Right cardiac atrium (tissue), 5 donors: ENCODE measurements at regions of chr11 and their contacts with region 1.

Region 1: DNA sequence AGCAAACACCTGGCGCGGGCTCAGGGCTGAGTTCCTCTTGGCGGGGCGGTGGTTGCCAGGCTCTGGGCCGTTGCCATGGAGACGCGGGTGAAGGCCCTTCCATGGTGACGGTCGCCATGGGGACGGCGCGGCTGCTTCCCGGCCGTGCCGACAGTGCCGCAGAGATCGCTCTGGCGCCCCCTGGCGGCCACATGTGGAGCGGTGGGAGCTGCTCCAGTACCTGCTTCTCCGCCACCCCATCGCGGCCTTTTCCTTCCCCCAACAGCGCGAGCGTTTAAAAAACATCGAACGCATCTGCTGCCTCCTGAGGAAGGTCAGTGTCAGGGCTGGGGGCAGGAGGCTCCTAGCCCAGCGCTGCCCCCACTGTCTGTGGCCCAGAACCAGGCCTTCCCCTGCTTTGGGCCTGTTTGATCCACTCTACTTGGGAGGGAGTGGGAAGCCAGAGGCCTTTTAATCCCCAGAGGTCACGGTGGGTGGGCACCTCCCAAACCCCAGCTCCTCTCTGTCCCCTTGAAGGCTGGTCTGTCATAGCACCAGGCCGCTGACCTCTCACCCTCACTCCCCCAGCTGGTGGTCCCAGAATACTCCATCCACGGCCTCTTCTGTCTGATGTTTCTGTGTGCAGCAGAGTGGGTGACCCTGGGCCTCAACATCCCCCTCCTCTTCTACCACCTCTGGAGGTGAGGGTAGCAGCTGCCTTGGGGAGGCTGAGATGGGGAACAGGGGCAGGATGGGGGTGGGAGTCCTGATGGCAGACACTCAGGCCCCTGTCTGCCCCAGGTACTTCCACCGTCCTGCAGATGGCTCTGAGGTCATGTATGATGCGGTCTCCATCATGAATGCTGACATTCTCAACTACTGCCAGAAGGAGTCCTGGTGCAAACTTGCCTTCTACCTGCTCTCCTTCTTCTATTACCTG is 4.8 kb downstream of the CNIH2 start:
- DNase-seq: peak; percentile 99 to 100 (median 99)
- ATAC-seq: peak; percentile 80 to 87
- H3K4me3 ChIP-seq: no peak overlapping the region
- H3K27ac ChIP-seq: no peak overlapping the region
- H3K4me1 ChIP-seq: no peaks in the 10 kb centered on the region
- H3K27me3 ChIP-seq: no peaks in the 10 kb centered on the region

Region 2: DNA sequence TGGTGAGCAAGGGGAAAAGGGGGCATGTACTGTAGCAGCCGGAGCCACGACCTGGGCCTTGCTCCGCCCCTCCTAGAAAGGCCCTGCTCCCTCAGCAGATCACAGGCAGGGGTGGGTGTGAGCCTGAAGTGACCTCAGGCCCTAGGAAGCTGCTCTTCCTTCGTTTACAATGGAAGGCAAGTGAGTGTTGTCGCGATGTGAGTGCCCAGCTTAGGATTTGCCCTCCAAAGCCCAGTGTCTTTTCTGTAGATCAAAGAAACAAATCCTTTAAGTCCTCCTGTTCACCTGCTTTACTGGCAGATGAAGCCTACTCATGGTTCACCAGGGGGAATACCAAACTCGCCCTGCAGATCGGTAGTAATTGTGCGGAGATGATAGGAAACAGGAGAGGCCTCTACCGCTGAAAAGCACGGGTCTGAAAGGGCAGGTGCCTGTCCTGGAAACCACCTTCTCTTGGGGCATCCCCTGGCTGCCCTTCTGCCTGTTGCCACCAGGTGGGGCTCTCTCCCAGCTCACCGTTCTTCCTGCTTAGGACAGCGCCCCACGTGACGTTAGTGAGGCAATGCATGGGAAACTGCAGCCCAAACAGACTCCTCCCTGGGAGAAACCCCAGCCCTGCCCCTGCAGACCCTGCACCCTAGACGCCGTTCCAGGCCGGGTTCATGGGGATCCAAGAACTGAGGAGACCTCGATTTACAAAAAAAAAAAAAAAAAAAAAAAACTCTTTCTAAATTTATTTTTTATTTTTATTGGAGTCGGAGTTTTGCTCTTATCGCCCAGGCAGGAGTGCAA is 60.2 kb before region 1 on chr11:
- intact Hi-C with region 1: loop called in 1 of 4 experiments (anchors 2 kb)
- DNase-seq: peak; percentile 88 to 95 (median 93)
- ATAC-seq: peak; percentile 84 to 88
- H3K4me3 ChIP-seq: no peak overlapping the region
- H3K27ac ChIP-seq: no peak overlapping the region
- H3K4me1 ChIP-seq: no peaks in the 10 kb centered on the region
- H3K27me3 ChIP-seq: no peaks in the 10 kb centered on the region

Region 3: GRCh38 chr11:66568124-66568916 is 285.6 kb after region 1 on chr11 and contains the start of gene CTSF:
- intact Hi-C with region 1: no loop called
- DNase-seq: peak; percentile 89 to 96 (median 96)
- ATAC-seq: peak; percentile 96
- H3K4me3 ChIP-seq: peak within 1 kb of the TSS; percentile 61
- H3K27ac ChIP-seq: no peak within 1 kb of the TSS
- H3K4me1 ChIP-seq: no peaks in the 10 kb centered on the region
- H3K27me3 ChIP-seq: no peaks in the 10 kb centered on the region
- total RNA-seq, gene CTSF: 85.5 to 136 (median 95.2) TPM